Heart right ventricle (tissue), 16 donors: ENCODE measurements at regions of chr15 and their contacts with region 1.

Region 1: GRCh38 chr15:29844284-29844913 is 22.1 kb upstream of the TJP1 start:
- DNase-seq: no peak
- ATAC-seq: peak in 1 of 8 donors; percentile 43
- H3K4me3 ChIP-seq: no peak overlapping the region
- H3K27ac ChIP-seq: no peak overlapping the region
- H3K4me1 ChIP-seq: peaks cover 3 to 28% (median 14%) of the 10 kb centered on the region in 9 donors
- H3K27me3 ChIP-seq: no peaks in the 10 kb centered on the region
- CTCF ChIP-seq: no peak

Region 2: GRCh38 chr15:29528276-29528675 is 316.1 kb before region 1 on chr15:
- intact Hi-C with region 1: no loop called
- DNase-seq: peak in 1 of 2 donors; percentile 15
- ATAC-seq: peak in 2 of 8 donors; percentile 39 to 69
- H3K4me3 ChIP-seq: no peak overlapping the region
- H3K27ac ChIP-seq: no peak overlapping the region
- H3K4me1 ChIP-seq: peaks cover 0 to 5% (median 0%) of the 10 kb centered on the region in 9 donors
- H3K27me3 ChIP-seq: no peaks in the 10 kb centered on the region
- CTCF ChIP-seq: no peak

Region 3: DNA sequence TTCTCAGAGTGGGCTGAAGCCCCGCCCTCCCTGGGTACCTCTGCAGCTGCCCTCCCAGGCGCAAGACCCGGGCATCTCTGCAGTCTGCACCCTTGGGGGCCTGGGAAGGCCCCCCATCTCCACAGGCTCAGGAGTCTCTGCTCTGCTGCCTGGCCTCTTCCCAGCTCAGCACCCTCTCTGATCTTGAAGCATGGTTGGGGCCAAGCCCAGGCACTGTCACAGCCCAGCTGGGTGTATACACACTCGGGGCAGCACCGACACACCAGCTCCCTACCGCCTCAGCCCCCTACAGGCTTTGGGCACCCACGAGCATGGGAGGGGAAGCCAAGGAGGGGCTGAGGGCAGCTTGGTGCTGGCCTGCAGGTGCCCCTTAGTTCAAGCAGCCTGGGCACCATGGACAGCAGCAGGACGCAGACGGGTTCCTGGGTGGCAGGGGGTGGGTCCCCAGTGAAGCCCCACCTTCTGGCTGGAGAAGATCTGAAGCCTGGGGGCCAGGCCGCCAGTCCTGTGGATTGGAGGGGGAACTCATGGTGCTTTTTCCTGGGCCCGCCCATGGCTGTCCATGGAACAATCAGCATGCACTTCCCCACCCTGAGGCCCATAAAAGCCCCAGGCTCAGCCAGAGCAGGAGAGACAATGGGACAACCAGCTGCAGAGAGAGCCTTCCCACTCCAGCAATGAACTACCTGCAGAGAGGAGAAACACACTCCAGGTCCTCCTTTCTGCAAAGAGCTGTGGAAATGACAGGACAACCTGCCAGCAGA is 192.7 kb before region 1 on chr15:
- intact Hi-C with region 1: no loop called
- DNase-seq: no peak
- ATAC-seq: no peak
- H3K4me3 ChIP-seq: no peak overlapping the region
- H3K27ac ChIP-seq: no peak overlapping the region
- H3K4me1 ChIP-seq: no peaks in the 10 kb centered on the region
- H3K27me3 ChIP-seq: peaks cover 0 to 3% (median 0%) of the 10 kb centered on the region in 7 donors
- CTCF ChIP-seq: no peak

Region 4: DNA sequence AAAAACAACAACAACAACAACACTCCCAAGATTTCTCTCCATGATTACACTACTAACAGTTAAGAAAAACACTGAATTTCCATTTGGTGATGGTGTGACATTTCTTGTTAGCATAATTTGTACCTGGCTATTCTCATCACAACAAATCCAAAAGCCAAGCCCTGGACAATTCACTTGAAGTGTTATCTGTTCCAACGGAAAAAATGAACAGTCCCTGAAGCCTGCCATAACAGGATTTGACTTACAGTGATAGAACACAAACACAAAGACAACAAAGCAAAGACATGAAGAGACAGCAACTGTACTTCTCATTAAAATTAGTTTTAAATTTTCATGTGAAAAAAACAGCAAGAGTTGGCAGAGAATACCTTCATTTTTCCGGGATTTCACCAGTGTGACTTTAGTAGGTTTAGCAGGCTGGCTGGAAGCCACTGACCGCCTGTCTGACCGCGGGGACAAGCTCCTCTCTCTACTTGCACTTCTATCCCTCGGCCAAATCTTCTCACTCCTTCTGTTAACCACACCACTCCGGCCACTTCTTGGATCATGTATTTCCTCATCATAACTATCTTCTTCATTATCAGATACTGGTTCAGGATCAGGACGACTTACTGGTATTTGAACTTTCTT is 78.4 kb before region 1 on chr15:
- intact Hi-C with region 1: no loop called
- DNase-seq: peak; percentile 19 to 30
- ATAC-seq: peak in 6 of 8 donors; percentile 46 to 71 (median 61)
- H3K4me3 ChIP-seq: no peak overlapping the region
- H3K27ac ChIP-seq: peak overlapping the region in 6 of 10 donors; percentile 5 to 45 (median 21)
- H3K4me1 ChIP-seq: peaks cover 6 to 44% (median 30%) of the 10 kb centered on the region in 9 donors
- H3K27me3 ChIP-seq: no peaks in the 10 kb centered on the region
- CTCF ChIP-seq: no peak

Region 5: DNA sequence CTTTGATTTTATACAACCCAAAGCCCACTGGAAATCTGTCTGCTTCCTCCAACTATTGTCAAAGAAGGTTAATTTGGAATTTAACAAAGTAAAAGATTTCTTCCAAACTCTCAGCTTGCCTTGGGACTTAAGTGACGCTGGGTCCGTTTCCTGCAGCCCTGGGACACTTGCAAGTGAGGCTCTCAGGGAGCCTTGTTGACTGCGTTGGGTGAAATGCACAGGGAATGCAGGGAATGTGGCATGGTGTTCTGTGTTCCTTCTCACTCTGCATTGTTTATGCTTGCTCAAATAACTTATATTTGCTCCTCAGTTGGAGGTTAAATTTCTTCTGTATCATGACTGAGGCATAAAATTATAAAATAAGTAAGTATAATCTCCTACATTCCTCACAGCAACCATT is 38.7 kb after region 1 on chr15:
- intact Hi-C with region 1: loop called in 1 of 10 experiments (anchors 5 kb)
- DNase-seq: no peak
- ATAC-seq: peak in 5 of 8 donors; percentile 52 to 88 (median 79)
- H3K4me3 ChIP-seq: peak overlapping the region in 1 of 10 donors; percentile 2
- H3K27ac ChIP-seq: peak overlapping the region in 8 of 10 donors; percentile 40 to 73 (median 66)
- H3K4me1 ChIP-seq: peaks cover 0 to 53% (median 38%) of the 10 kb centered on the region in 9 donors
- H3K27me3 ChIP-seq: no peaks in the 10 kb centered on the region
- CTCF ChIP-seq: no peak

Region 6: DNA sequence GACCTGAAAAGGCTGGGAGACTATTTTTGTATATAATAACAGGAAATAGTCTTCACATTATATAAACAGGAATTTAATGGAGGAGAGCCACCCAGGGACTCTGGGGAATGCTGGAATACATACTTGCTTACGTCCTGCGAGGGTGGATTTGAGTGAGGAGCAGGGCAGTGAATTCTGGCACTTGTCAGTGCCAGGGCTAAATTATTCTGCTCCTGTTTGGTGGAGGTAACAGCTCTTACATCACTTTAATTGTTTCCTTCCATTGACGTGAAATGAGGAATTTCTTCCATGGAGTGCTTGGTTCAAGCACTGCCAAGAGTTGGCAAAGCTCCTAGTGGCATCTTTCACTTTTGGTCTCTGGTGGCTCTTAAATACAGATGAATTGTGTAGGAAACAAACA is 144.3 kb after region 1 on chr15:
- intact Hi-C with region 1: no loop called
- DNase-seq: no peak
- ATAC-seq: peak in 2 of 8 donors; percentile 79 to 84
- H3K4me3 ChIP-seq: no peak overlapping the region
- H3K27ac ChIP-seq: no peak overlapping the region
- H3K4me1 ChIP-seq: peaks cover 0 to 17% (median 6%) of the 10 kb centered on the region in 9 donors
- H3K27me3 ChIP-seq: peaks cover 0 to 15% (median 0%) of the 10 kb centered on the region in 7 donors
- CTCF ChIP-seq: no peak